Dendritic cell treated with granulocyte-macrophage colony-stimulating factor and Interleukin-4, amounts not matched to agents 40 ng/mL and 50 ng/mL, for 4 days (primary cell): ENCODE measurements at regions of chrX and their contacts with region 1.

Region 1: DNA sequence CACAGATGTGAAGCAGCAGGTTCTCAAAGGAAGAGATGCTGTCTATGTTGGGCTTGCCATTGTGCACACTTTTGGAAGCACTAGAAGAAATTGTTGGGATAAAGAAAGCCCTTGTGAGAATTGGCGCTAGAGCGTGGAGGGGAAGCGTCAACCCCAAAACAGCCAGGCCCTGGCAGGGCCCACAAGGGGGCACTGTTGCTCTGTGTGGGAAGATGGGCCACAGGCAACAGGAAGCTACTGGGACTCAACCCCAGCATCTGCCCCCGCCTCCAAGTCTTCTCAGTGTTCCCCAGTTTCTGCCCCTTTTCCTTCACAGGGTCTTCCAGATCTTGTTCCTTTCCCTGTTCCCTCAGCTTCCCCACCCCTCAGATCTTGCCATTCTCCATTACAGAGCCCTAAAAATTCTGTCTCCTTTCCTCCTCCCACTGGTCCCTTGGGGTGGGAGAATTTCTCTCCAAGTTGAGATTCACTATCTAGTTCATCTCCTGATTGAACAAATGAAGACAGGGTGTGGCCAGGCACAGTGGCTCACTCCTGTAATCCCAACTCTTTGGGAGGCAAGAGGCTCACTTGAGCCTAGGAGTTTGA is 85.5 kb downstream of the STARD8 start:
- H3K4me3 Mint-ChIP-seq: no peak overlapping the region
- H3K27ac Mint-ChIP-seq: no peak overlapping the region
- H3K4me1 Mint-ChIP-seq: peaks cover 6% of the 10 kb centered on the region
- H3K27me3 Mint-ChIP-seq: no peaks in the 10 kb centered on the region

Region 2: GRCh38 chrX:68511255-68511654 is 221.7 kb before region 1 on chrX:
- intact Hi-C with region 1: loop called (anchors 5 kb)
- H3K4me3 Mint-ChIP-seq: no peak overlapping the region
- H3K27ac Mint-ChIP-seq: no peak overlapping the region
- H3K4me1 Mint-ChIP-seq: peaks cover 15% of the 10 kb centered on the region
- H3K27me3 Mint-ChIP-seq: no peaks in the 10 kb centered on the region

Region 3: DNA sequence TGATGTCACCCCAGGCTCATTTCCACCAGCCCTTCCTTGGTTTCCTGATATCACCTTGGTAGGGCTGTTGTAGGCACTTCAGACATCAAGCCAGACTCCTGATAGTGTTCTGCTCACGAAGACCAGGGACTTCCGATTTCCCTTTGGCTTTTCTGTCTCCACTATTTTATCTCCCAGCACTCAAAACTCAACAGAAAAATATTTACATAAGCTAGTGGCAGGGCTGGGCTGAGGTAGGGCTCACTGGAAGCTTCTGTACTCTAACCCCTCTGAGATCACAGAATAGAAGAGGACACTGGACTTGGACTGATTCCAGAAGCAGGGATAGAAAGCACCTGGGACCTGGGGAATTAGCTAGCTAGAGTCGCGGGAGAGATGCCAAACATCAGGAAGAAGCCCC is 61.5 kb after region 1 on chrX:
- intact Hi-C with region 1: no loop called
- H3K4me3 Mint-ChIP-seq: no peak overlapping the region
- H3K27ac Mint-ChIP-seq: no peak overlapping the region
- H3K4me1 Mint-ChIP-seq: no peaks in the 10 kb centered on the region
- H3K27me3 Mint-ChIP-seq: no peaks in the 10 kb centered on the region

Region 4: DNA sequence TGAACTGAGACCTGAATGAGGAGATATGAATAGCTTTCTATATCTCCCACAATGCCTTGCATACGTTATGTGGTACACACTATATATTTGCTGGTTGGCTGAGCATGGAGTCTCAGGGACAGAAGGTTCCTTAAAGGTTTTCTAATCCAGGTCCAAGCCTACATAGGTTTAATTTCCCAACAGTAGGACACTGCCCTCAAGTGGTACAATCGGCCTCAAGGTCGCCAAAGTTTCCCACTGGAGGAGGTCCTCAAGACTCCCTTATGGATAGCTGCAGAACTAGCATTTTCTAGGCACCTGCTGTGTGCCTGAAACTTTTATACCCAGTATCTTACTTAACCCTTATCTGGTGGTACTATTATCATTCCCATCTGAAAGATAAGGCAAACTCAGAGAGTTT is 74.8 kb after region 1 on chrX:
- intact Hi-C with region 1: loop called (anchors 2 kb)
- H3K4me3 Mint-ChIP-seq: no peak overlapping the region
- H3K27ac Mint-ChIP-seq: no peak overlapping the region
- H3K4me1 Mint-ChIP-seq: no peaks in the 10 kb centered on the region
- H3K27me3 Mint-ChIP-seq: peaks cover 8% of the 10 kb centered on the region

Region 5: GRCh38 chrX:69060631-69061408 is 327.8 kb after region 1 on chrX:
- intact Hi-C with region 1: loop called (anchors 2 kb)
- H3K4me3 Mint-ChIP-seq: no peak overlapping the region
- H3K27ac Mint-ChIP-seq: no peak overlapping the region
- H3K4me1 Mint-ChIP-seq: no peaks in the 10 kb centered on the region
- H3K27me3 Mint-ChIP-seq: peaks cover 3% of the 10 kb centered on the region

Region 6: DNA sequence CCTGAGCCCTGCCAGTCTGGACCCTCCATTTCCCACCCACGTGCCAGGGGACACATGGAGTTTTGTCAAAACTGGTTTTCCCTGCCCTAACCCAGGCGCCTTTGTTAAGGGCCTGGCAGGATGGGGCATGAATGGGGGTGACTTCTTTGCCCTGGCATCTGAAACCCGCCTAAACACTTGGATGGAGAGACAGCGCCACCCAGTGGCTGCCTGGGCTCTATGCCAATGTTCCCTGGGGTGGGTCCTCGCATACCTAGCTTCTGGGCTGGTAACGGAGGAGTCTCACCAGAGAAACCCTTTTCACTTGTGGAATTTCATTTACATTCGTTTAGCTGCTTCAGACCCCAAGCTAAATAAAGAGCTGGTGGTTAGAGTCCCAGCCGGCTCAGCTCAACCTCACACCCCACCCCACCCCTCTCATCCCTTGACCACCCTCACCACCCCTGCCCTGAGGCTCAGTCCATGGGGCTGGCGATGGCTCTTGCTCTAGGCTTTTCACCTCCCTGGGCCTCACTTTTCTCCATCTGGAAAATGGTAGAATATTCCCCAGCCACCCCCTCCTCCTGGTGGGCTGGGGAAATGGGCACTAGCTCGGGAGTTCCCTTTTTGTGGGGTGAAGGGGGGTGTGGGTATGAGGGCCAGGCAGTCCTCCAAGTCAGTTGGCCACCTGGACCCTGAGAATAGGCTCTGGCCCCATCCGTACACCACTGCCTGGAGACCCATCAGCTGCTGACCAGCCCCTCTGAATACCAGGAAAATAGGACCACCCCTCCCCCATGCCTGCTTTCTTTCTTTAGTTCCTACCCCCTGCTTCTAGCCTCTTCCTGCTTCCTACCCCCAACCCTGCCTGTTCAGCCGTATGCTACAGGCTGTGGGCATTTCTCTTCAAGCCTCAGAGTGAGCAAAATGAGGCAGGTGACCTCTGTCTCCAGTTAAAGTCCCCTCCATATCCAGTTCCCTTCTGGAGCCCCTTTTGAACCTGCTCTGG is 489.4 kb after region 1 on chrX:
- intact Hi-C with region 1: loop called (anchors 5 kb)
- H3K4me3 Mint-ChIP-seq: no peak overlapping the region
- H3K27ac Mint-ChIP-seq: no peak overlapping the region
- H3K4me1 Mint-ChIP-seq: no peaks in the 10 kb centered on the region
- H3K27me3 Mint-ChIP-seq: peaks cover 7% of the 10 kb centered on the region

Region 7: DNA sequence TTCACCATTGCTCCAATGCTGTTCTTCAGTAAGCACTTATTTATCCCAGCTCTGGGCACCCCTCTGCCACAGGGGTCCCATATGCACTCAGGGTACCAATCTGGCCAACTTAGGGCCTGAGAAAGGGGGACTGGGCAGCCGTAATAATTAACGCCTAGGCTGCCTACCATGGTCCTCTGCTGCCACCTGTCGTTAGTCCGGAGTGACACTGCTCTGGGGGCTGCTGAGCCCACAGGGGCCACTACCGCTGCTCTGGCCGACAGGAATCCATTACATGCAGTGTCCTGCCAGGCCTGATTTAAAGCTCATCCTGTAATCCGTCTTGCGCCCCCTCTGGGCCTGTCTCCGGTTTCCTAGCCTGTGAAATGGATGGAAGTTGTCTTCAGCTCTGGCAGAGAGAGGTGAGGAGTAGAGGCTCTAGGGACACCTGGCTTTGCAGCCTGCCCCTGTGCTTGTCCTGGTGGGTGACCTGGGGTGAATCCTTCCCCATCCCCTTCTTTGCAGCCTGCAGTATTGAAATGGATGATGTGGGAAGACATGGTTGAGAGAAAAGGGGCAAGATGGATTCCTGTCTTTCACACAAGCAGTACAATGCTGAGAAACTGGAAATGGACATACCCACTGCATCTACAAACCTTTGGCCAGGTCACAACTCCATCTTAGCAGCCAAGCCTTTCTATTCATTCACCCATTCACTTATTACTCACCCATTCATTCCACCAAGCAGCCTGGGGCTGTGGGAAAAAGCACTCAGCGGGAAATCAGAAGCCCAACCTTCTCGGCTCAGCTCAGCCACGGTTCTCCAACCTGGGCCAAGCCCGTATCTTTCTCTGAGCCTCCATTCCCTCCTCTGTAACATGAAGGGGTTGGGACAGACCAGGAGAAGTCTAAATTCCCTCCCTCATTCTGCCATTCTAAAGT is 654.8 kb after region 1 on chrX:
- intact Hi-C with region 1: loop called (anchors 5 kb)
- H3K4me3 Mint-ChIP-seq: no peak overlapping the region
- H3K27ac Mint-ChIP-seq: no peak overlapping the region
- H3K4me1 Mint-ChIP-seq: peaks cover 5% of the 10 kb centered on the region
- H3K27me3 Mint-ChIP-seq: peaks cover 1% of the 10 kb centered on the region